ENCODE measurements at regions of chr1 and their contacts with region 1.

Region 1: DNA sequence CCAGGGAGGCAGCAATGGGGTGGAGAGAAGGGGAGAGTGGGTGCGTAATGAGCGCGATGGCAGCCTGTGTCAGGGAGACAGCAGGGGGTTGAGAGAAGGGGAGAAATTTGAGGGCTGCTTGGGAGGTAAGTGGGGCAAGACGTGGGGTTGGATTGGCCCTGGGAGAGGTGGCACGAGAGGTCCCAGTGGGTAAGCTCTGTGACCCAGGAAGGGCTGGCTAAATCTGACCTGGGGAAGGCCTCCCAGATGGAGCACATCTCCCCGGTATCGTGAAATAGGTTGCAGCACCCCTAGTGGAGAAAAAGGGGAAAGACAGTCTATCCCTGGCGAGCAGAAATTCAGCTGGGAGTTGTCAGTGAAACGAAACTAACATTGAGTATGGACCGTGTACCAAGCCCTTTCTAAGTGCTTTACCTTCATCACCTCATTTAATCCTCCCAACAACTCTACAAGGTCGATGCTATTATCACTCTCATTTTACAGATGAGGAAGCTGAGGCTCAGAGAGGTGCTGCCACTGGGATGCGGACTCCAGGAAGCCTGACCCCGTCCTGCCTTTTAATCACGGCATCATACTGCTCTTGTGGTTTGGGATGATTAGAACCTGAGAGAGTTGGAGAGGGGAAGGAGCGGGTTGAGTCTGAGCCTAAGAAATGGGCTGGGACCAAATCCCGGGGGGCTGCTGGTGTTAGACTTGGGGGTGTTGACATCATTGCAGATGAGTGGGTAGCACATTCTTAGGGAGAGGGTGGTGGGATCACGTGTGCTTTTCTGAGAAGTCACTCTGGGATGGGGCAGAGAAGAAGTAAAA is 56.6 kb upstream of the RPL11 start:
- DNase-seq: peak in 1 of 2 donors; percentile 85
- H3K4me3 ChIP-seq: peak overlapping the region; percentile 58 to 68
- H3K27ac ChIP-seq: peak overlapping the region; percentile 89 to 91
- H3K4me1 ChIP-seq: peaks cover 0 to 3% of the 10 kb centered on the region in 2 donors
- H3K27me3 ChIP-seq: no peaks in the 10 kb centered on the region
- CTCF ChIP-seq: peak; percentile 84 to 94 (median 89)

Region 2: DNA sequence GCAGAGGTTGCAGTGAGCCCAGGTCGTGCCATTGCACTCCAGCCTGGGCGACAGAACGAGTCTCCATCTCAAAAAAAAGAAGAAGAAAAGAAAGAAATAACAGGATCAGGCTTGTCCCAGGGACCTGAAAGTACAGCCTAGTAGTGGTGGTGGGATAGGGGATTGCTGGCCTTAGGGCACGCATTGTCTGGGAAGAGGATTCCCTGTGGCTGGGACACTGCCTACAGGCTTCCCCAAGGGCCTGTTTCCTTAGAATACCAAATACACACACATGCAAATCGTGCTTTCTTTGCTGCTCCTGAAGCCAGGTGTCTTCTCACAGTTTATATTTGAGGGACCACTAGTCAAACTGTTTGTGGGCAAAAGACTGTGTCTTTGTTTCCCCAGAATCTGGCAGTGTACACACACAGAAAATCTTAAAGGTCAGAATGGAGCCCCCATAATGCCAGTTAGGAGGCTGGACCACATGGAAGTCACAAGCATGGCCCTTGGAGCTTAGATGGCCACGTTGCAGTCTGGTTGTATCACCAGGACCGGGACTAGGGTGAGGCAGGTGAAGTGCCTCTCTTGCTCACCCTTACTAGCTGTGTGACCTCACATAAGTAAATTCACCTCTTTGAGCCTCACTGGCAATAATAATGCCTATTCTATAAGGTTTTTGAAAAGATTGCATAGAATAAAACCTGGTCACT is 138.4 kb before region 1 on chr1:
- intact Hi-C with region 1: loop called (anchors 1 kb)
- DNase-seq: no peak
- H3K4me3 ChIP-seq: no peak overlapping the region
- H3K27ac ChIP-seq: no peak overlapping the region
- H3K4me1 ChIP-seq: peaks cover 0 to 3% of the 10 kb centered on the region in 2 donors
- H3K27me3 ChIP-seq: no peaks in the 10 kb centered on the region
- CTCF ChIP-seq: no peak

Region 3: DNA sequence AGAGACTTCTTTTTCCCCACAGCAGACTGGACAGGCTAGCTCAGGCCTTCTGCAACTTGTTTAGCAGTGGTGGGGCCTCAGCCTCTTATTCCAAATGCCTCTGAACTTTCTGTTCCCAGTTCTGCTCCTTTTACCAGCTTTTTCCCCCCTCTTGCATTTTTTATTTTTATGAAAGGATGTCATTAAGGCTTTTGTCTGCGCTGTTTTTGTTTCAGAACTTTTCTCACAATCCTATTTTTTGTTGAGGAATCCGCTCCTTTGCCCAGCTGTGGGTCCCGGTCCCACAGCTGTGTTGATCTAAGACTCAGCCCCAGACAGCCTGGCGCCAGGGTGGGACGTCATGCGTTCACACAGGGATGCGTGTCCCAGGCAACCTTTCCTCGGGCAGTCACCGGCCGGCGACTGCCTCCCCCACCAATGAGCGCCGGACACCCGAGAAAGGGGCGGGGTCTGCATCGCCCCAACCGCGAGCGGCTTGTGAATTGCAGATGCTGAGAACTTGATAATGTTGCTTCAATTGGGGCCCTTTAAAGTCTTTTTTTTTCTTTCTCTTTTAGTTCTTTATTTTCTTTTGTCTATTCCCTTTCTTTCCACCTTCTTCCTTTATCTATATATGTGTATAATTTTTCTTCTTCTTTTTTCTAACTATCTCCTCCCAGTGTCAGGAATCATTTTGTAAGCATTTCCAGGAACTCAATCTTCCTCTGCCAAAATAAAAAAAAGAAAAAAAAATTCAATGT is 72.7 kb before region 1 on chr1:
- intact Hi-C with region 1: no loop called
- DNase-seq: peak; percentile 95 to 99
- H3K4me3 ChIP-seq: peak overlapping the region in 1 of 2 donors; percentile 95
- H3K27ac ChIP-seq: peak overlapping the region; percentile 92
- H3K4me1 ChIP-seq: peaks cover 21 to 49% of the 10 kb centered on the region in 2 donors
- H3K27me3 ChIP-seq: no peaks in the 10 kb centered on the region
- CTCF ChIP-seq: no peak

Region 4: DNA sequence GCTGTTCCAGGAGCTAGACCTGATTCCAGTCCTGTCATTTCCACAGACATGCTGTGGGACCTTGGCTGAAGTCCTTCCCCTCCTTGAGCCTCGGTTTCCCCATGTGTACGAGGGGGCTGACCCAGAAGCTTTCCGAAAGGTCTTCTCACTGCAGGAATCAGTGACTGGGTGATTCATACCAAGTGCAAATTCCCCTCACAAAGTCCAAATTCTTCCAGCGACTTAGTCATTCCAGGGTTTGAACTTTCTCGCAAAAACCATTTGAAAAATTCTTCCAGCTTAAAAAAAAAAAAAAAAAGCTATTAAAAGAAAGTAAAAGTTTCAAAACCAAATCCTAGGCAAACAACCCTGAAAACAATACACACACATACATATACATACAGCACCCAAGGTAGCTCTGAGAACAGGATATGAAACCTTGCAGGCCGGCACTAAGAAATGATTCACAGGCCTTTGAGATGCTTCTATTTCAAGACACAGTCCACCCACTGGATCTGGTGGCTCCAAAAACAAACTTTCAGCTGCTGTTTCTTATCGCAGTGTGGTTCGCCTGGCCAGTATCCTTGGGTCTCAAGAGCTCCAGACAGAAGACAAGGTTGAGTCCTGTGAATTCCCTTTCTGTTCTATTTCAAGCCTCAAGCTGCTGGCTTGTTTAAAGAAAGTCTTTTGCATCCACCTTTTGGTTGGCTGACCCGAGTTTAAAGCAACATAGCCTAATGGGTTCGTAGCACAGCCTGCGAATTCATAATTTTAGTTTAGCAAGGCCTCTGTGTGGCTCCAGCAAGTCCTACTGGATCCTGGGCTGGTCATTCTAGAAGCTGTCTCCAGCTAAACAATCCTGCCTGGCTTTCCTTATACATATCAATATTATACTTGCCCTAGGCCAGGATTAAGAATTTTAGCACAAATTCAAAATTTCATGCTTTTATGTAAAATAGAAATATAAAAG is 57.7 kb before region 1 on chr1:
- intact Hi-C with region 1: loop called (anchors 5 kb)
- DNase-seq: peak; percentile 18 to 88
- H3K4me3 ChIP-seq: peak overlapping the region; percentile 31 to 64
- H3K27ac ChIP-seq: peak overlapping the region; percentile 93 to 94
- H3K4me1 ChIP-seq: peaks cover 22 to 38% of the 10 kb centered on the region in 2 donors
- H3K27me3 ChIP-seq: no peaks in the 10 kb centered on the region
- CTCF ChIP-seq: no peak